CD4-positive, alpha-beta memory T cell (primary cell): ENCODE measurements at regions of chr17 and their contacts with region 1.

Region 1: DNA sequence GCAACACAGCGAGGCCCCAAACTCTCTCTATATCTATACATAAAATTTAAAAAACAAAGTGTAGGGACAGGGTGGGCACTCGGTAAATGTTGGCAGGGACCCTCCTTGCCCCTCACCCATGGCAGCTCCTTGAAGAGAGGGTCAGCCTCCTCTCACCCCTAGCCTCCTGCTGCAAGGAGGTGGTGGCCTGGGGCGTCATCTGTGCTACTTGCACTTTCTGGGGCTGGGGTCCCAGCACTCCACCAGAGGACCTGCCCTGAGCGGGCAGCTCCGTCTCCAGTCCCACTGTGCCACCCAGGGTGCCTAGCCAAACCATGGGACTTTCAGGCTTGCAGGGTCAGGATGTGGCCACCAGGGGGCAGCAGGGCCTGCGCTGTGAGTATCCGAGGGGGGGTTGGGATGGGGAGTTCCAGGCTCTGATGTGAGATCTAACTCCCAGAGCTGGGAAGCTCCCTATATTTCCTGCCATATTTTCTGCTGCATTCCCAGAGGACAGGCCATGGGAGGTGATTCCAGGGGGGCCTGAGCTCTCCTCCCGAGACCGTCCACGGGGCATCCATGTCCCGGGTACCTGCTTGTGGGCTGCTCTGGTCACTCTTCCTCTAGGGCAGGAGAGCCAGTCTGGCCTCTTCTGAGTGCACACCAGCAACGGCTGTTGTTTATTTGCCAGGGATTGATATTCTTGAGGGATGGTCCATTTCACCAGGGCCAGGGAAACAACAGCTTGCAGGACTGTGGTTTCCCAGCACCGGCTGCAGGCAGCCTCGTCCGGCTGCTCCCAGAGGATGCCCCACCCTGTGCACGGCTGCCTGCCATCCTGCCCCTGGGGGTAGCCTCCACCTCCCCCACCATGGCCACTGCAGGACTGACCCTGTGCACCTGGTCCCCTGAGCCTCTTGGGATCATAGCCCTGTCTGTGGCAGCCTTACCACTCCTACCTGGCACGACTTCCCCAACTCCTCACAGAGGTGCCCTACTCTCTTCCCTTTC is 1.1 kb downstream of the GPR142 start:
- DNase-seq: peak; percentile 53 to 72 (median 60)
- H3K4me3 ChIP-seq: no peak overlapping the region
- H3K4me3 Mint-ChIP-seq: peak overlapping the region; percentile 21 to 82 (median 66)
- H3K27ac ChIP-seq: no peak overlapping the region
- H3K27ac Mint-ChIP-seq: peak overlapping the region in 1 of 7 donors; percentile 53
- H3K4me1 ChIP-seq: peaks cover 16% of the 10 kb centered on the region
- H3K4me1 Mint-ChIP-seq: peaks cover 7 to 17% (median 12%) of the 10 kb centered on the region in 4 donors
- H3K27me3 ChIP-seq: no peaks in the 10 kb centered on the region
- H3K27me3 Mint-ChIP-seq: peaks cover 3 to 4% of the 10 kb centered on the region in 2 donors

Region 2: DNA sequence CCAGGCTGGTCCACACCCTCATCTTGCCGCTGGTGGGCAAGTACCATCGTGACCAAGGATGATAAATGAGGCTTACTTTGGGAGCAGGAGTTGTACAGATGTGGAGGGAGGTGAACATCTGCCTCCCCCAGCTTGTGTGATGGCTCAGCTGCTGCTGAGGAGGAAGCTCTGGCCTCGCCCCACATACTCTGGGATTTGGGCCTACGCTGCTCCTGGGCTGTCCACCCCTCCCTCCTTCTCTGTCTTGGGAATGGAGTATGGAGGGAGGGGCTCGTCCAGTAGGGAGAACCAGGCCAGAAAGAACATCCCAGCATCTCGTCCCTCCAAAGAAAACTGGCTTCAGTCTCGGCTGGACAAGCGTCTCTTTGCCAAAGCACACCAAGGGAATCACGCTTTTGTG is 921.8 kb before region 1 on chr17:
- CTCF ChIA-PET with region 1: no interaction called
- POLR2A ChIA-PET with region 1: no interaction called
- intact Hi-C with region 1: no loop called
- DNase-seq: no peak
- H3K4me3 ChIP-seq: no peak overlapping the region
- H3K4me3 Mint-ChIP-seq: no peak overlapping the region
- H3K27ac ChIP-seq: no peak overlapping the region
- H3K27ac Mint-ChIP-seq: no peak overlapping the region
- H3K4me1 ChIP-seq: no peaks in the 10 kb centered on the region
- H3K4me1 Mint-ChIP-seq: no peaks in the 10 kb centered on the region
- H3K27me3 ChIP-seq: no peaks in the 10 kb centered on the region
- H3K27me3 Mint-ChIP-seq: no peaks in the 10 kb centered on the region

Region 3: DNA sequence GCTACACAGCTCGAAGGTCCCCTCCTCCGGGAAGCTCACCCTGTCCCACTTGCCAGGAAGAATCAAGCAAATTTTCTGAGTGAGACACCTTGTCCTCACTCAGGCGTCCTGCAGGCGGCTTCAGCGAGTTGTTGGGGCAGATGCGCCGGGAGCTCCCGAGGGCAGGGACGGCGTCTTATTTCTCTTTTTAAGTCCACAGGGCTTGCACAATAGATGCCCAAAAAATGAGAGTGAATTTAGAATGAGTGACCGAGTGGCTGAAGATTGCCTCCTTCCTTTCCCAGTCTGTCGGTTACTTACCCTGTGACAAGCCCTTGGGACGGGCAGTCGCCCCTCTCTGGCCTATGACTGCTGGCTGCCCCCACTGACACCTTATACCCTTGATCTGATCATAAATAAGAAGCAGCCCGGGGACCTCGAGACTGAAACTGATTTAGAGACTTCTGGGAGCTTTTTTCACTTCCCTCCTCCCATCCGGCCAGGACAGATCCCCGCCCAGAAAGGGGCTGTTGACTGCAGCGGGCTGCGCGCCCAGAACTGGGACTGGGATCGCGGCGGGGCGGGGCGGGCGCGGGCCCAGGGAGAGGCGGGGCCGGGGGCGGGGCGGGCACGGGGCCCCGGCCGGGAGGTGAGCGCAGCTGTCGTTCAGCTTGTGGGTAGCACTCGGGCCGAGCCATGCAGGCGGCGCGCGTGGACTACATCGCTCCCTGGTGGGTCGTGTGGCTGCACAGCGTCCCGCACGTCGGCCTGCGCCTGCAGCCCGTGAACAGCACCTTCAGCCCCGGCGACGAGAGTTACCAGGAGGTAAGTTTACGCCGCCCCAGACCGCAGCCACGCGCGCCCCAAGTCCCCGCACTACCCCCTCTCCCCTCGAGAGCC is 155.2 kb before region 1 on chr17 and contains the start of gene TTYH2:
- CTCF ChIA-PET with region 1: interaction called, 10 read pairs
- POLR2A ChIA-PET with region 1: no interaction called
- intact Hi-C with region 1: loop called (anchors 2 kb)
- DNase-seq: peak; percentile 65 to 83 (median 71)
- H3K4me3 ChIP-seq: peak within 1 kb of the TSS; percentile 58
- H3K4me3 Mint-ChIP-seq: peak within 1 kb of the TSS; percentile 83 to 97 (median 91)
- H3K27ac ChIP-seq: peak within 1 kb of the TSS; percentile 52
- H3K27ac Mint-ChIP-seq: peak within 1 kb of the TSS; percentile 84 to 97 (median 92)
- H3K4me1 ChIP-seq: peaks cover 59% of the 10 kb centered on the region
- H3K4me1 Mint-ChIP-seq: peaks cover 26 to 67% (median 46%) of the 10 kb centered on the region in 4 donors
- H3K27me3 ChIP-seq: no peaks in the 10 kb centered on the region
- H3K27me3 Mint-ChIP-seq: no peaks in the 10 kb centered on the region
- total RNA-seq, gene TTYH2: 40.5 to 42.4 TPM

Region 4: GRCh38 chr17:74249590-74250270 is 118.7 kb before region 1 on chr17:
- CTCF ChIA-PET with region 1: no interaction called
- POLR2A ChIA-PET with region 1: no interaction called
- intact Hi-C with region 1: no loop called
- DNase-seq: no peak
- H3K4me3 ChIP-seq: no peak overlapping the region
- H3K4me3 Mint-ChIP-seq: peak overlapping the region in 1 of 8 donors; percentile 49
- H3K27ac ChIP-seq: no peak overlapping the region
- H3K27ac Mint-ChIP-seq: peak overlapping the region in 1 of 7 donors; percentile 84
- H3K4me1 ChIP-seq: no peaks in the 10 kb centered on the region
- H3K4me1 Mint-ChIP-seq: peaks cover 0 to 10% (median 6%) of the 10 kb centered on the region in 4 donors
- H3K27me3 ChIP-seq: no peaks in the 10 kb centered on the region
- H3K27me3 Mint-ChIP-seq: no peaks in the 10 kb centered on the region

Region 5: DNA sequence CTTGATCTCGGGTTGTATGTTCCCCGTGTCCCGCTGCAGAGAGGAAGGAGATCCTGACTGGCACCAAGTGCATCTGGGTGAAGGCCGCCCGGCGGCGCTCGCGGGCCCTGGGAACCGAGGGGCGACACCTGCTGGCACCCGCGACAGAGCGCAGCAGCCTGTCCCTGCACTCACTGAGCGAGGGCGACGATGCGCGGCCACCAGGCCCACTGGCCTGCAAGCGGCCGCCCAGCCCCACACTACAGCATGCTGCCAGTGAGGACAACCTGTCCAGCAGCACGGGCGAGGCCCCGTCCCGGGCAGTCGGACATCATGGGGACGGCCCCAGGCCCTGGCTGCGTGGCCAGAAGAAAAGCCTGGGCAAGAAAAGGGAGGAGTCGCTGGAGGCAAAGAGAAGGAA is 14.3 kb before region 1 on chr17:
- CTCF ChIA-PET with region 1: interaction called, 23 read pairs
- POLR2A ChIA-PET with region 1: no interaction called
- intact Hi-C with region 1: no loop called
- DNase-seq: peak; percentile 49 to 55 (median 54)
- H3K4me3 ChIP-seq: no peak overlapping the region
- H3K4me3 Mint-ChIP-seq: peak overlapping the region in 3 of 8 donors; percentile 9 to 54 (median 32)
- H3K27ac ChIP-seq: no peak overlapping the region
- H3K27ac Mint-ChIP-seq: no peak overlapping the region
- H3K4me1 ChIP-seq: peaks cover 13% of the 10 kb centered on the region
- H3K4me1 Mint-ChIP-seq: peaks cover 5 to 20% (median 10%) of the 10 kb centered on the region in 4 donors
- H3K27me3 ChIP-seq: peaks cover 25% of the 10 kb centered on the region
- H3K27me3 Mint-ChIP-seq: peaks cover 29 to 31% of the 10 kb centered on the region in 2 donors

Region 6: GRCh38 chr17:74393346-74393942 is 25.1 kb after region 1 on chr17:
- CTCF ChIA-PET with region 1: interaction called, 17 read pairs
- POLR2A ChIA-PET with region 1: no interaction called
- intact Hi-C with region 1: no loop called
- DNase-seq: no peak
- H3K4me3 ChIP-seq: no peak overlapping the region
- H3K4me3 Mint-ChIP-seq: no peak overlapping the region
- H3K27ac ChIP-seq: no peak overlapping the region
- H3K27ac Mint-ChIP-seq: no peak overlapping the region
- H3K4me1 ChIP-seq: no peaks in the 10 kb centered on the region
- H3K4me1 Mint-ChIP-seq: no peaks in the 10 kb centered on the region
- H3K27me3 ChIP-seq: no peaks in the 10 kb centered on the region
- H3K27me3 Mint-ChIP-seq: peaks cover 0 to 4% of the 10 kb centered on the region in 2 donors

Region 7: GRCh38 chr17:74437702-74438101 is 69.3 kb after region 1 on chr17:
- CTCF ChIA-PET with region 1: no interaction called
- POLR2A ChIA-PET with region 1: no interaction called
- intact Hi-C with region 1: no loop called
- DNase-seq: no peak
- H3K4me3 ChIP-seq: no peak overlapping the region
- H3K4me3 Mint-ChIP-seq: peak overlapping the region in 1 of 8 donors; percentile 46
- H3K27ac ChIP-seq: no peak overlapping the region
- H3K27ac Mint-ChIP-seq: no peak overlapping the region
- H3K4me1 ChIP-seq: no peaks in the 10 kb centered on the region
- H3K4me1 Mint-ChIP-seq: peaks cover 0 to 1% (median 0%) of the 10 kb centered on the region in 4 donors
- H3K27me3 ChIP-seq: peaks cover 6% of the 10 kb centered on the region
- H3K27me3 Mint-ChIP-seq: peaks cover 14 to 26% of the 10 kb centered on the region in 2 donors

Region 8: DNA sequence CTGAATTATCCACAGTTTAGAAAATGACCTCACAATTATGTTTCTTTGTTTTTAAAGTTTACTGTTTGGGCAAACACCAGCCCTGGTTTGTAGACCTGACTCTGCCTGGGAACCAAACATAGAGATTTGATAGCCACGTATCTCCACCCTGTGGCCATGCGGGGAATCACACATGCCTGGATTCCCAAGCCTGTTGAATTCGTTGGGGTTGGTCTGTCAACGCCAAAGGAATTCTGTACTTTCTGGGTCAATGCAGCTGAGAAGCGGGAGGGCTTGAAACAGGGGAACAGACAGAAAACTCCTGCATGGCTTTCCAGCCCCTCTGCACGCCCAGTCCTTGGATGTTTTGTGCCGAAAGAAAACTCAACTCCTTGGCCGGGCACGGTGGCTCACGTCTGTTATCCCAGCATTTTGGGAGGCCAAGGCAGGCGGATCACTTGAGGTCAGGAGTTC is 125.0 kb after region 1 on chr17:
- CTCF ChIA-PET with region 1: interaction called, 27 read pairs
- POLR2A ChIA-PET with region 1: no interaction called
- intact Hi-C with region 1: loop called (anchors 1 kb)
- DNase-seq: peak; percentile 58 to 71 (median 65)
- H3K4me3 ChIP-seq: no peak overlapping the region
- H3K4me3 Mint-ChIP-seq: no peak overlapping the region
- H3K27ac ChIP-seq: no peak overlapping the region
- H3K27ac Mint-ChIP-seq: peak overlapping the region in 3 of 7 donors; percentile 12 to 70 (median 43)
- H3K4me1 ChIP-seq: peaks cover 5% of the 10 kb centered on the region
- H3K4me1 Mint-ChIP-seq: peaks cover 9 to 18% (median 12%) of the 10 kb centered on the region in 4 donors
- H3K27me3 ChIP-seq: no peaks in the 10 kb centered on the region
- H3K27me3 Mint-ChIP-seq: peaks cover 0 to 2% of the 10 kb centered on the region in 2 donors

Region 9: GRCh38 chr17:74513987-74514631 is 145.7 kb after region 1 on chr17:
- CTCF ChIA-PET with region 1: no interaction called
- POLR2A ChIA-PET with region 1: no interaction called
- intact Hi-C with region 1: no loop called
- DNase-seq: peak; percentile 34 to 80 (median 46)
- H3K4me3 ChIP-seq: no peak overlapping the region
- H3K4me3 Mint-ChIP-seq: peak overlapping the region in 6 of 8 donors; percentile 1 to 81 (median 66)
- H3K27ac ChIP-seq: no peak overlapping the region
- H3K27ac Mint-ChIP-seq: peak overlapping the region; percentile 38 to 99 (median 92)
- H3K4me1 ChIP-seq: no peaks in the 10 kb centered on the region
- H3K4me1 Mint-ChIP-seq: peaks cover 0 to 13% (median 2%) of the 10 kb centered on the region in 4 donors
- H3K27me3 ChIP-seq: no peaks in the 10 kb centered on the region
- H3K27me3 Mint-ChIP-seq: peaks cover 11 to 21% of the 10 kb centered on the region in 2 donors